ENCODE measurements at regions of chr12 and their contacts with region 1.

Region 1: GRCh38 chr12:120580787-120581723 is at the start of gene POP5:
- DNase-seq: peak; percentile 97 to 98 (median 97)
- ATAC-seq: peak; percentile 93
- H3K4me3 ChIP-seq: peak within 1 kb of the TSS; percentile 72
- H3K4me1 ChIP-seq: peaks cover 17% of the 10 kb centered on the region
- CTCF ChIP-seq: peak; percentile 5
- total RNA-seq, gene POP5: 29.5 to 44.3 (median 37.7) TPM

Region 2: GRCh38 chr12:120346681-120347080 is 234.4 kb before region 1 on chr12:
- intact Hi-C with region 1: no loop called
- DNase-seq: no peak
- ATAC-seq: no peak
- H3K4me3 ChIP-seq: no peak overlapping the region
- H3K4me1 ChIP-seq: no peaks in the 10 kb centered on the region
- CTCF ChIP-seq: no peak

Region 3: GRCh38 chr12:120620624-120621023 is 39.6 kb after region 1 on chr12:
- intact Hi-C with region 1: no loop called
- DNase-seq: peak; percentile 57 to 64 (median 61)
- ATAC-seq: peak; percentile 99
- H3K4me3 ChIP-seq: no peak overlapping the region
- H3K4me1 ChIP-seq: peaks cover 3% of the 10 kb centered on the region
- CTCF ChIP-seq: no peak

Region 4: DNA sequence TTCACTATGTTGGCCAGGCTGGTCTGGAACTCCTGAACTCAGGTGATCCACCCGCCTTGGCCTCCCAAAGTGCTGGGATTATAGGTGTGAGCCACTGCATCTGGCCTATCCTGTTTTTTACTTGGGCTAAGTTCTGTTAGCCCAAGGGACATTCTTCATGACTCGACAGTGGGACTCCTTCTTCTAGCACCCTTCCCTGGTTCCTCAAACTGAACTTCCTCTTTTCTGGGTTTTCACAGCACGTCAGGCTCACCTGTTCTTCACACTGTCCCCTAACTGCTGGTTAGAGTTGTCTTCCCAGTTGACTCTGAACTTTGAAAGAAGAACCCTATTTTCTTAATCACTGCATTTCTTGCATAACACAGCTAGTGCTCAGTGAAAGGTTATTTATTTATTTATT is 81.8 kb after region 1 on chr12:
- intact Hi-C with region 1: no loop called
- DNase-seq: no peak
- ATAC-seq: no peak
- H3K4me3 ChIP-seq: no peak overlapping the region
- H3K4me1 ChIP-seq: peaks cover 8% of the 10 kb centered on the region
- CTCF ChIP-seq: no peak

Region 5: DNA sequence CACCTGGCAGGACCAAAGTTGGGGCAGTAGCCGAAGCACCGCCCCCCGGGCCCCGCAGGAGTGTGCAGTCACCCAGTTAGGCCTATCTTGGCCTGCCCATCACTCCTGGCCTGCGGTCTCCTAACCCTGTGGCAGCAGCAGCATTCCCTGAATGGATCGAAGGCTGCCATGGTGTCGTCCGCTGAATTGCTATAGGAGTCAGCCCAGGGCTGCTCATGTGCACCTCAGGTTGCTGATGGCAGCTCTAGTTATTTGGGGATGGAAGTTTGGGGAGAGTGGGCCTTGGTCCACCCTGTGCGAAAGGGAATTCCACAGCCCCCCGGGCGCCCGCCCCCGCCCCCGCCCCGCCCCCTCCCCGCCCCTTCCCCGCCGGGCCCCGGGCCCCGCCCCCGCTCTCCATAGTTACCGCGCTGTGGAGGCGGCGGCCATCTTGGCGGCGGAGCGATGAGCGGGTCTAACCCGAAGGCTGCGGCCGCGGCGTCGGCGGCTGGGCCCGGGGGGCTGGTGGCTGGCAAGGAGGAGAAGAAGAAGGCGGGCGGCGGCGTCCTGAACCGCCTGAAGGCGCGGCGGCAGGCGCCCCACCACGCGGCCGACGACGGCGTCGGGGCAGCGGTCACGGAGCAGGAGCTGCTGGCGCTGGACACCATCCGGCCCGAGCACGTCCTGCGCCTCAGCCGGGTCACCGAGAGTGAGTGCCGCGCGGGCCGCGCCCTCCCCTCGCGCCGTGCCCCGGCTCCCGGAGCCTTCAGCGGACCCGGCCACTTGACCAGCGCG is 129.2 kb after region 1 on chr12 and contains the start of gene UNC119B:
- intact Hi-C with region 1: loop called in 1 of 2 experiments (anchors 10 kb)
- DNase-seq: peak; percentile 81 to 82 (median 82)
- ATAC-seq: peak; percentile 91
- H3K4me3 ChIP-seq: peak within 1 kb of the TSS; percentile 74
- H3K4me1 ChIP-seq: peaks cover 21% of the 10 kb centered on the region
- CTCF ChIP-seq: no peak
- total RNA-seq, gene UNC119B: 20.5 to 26.7 (median 23.3) TPM